BJ (cell line): ENCODE measurements at regions of chr12 and their contacts with region 1.

Region 1: GRCh38 chr12:8120072-8120713 is 3.2 kb upstream of the CLEC4A start:
- DNase-seq: no peak
- H3K4me3 ChIP-seq: no peak overlapping the region
- H3K27me3 ChIP-seq: no peaks in the 10 kb centered on the region
- CTCF ChIP-seq: no peak

Region 2: DNA sequence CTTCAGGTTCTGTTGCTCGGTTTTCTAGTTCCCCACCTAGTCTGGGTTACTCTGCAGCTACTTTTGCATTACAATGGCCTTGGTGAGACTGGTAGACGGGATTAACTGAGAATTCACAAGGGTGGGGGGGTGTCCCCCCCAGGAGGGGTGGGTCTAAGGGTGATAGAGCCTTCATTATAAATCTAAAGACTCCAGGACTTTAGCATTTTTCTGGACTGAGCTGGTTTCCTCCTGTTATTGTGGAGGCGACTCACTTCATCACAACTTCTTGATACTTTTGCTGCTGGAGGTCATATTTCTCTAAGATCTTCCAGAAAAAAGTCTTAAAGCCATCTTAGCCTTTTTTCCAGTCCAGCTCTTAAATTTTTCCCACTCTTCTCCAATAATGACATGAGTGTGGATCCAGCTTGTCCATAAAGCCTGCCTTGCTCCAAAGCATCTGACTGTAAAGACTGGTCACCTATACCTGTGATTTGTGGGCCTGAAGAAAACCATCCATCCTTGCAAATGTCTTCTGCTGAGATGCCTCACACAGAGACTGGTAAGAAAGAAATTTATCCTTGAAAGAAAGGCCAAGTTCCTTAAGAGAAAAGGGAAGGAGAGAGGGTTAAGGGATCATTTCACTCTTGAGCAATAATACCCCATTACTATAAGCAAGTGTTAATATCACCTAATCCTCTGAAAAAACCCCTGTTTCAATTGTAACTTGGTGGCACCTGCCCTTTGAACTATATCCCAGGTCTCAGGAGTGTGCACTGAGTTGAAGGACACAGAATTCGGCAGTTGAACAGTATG is 227.8 kb before region 1 on chr12:
- CTCF ChIA-PET with region 1: no interaction called
- POLR2A ChIA-PET with region 1: no interaction called
- DNase-seq: no peak
- H3K4me3 ChIP-seq: no peak overlapping the region
- H3K27me3 ChIP-seq: no peaks in the 10 kb centered on the region
- CTCF ChIP-seq: no peak

Region 3: DNA sequence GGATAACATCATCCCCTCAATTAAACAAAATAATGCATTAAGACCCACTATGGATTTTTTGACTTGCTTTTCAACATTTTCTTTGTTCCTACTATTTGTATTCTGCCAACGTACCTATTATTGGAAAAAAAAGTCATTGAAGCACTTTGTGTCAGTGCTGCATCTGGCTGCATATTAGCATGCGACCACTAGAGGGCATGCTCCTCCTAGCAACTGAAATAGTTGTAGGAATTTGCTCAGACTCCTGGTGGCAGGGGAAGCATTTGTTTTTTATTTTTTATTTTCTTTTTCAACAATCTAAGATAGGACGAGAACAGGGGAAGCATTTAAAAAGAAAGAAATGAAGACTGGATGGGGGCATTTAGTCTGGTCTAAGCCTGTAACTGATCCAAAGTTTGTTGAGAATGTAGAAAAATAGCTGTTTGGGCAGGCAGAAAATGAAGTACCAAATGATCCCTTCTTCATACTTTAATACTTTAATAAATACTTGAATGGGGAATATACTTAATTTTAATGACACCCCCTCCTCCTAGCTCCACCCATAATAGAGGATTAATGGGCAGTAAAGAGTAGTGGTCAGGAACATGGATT is 11.3 kb before region 1 on chr12:
- CTCF ChIA-PET with region 1: interaction called, 11 read pairs
- POLR2A ChIA-PET with region 1: no interaction called
- DNase-seq: peak; percentile 18
- H3K4me3 ChIP-seq: no peak overlapping the region
- H3K27me3 ChIP-seq: no peaks in the 10 kb centered on the region
- CTCF ChIP-seq: peak; percentile 97